T-cell (primary cell): ENCODE measurements at regions of chr10 and their contacts with region 1.

Region 1: GRCh38 chr10:62816331-62817120 is at the start of gene EGR2:
- DNase-seq: peak; percentile 92 to 98 (median 95)
- ATAC-seq: peak; percentile 85 to 86 (median 86)
- H3K4me3 ChIP-seq: peak within 1 kb of the TSS; percentile 57 to 86
- H3K4me3 Mint-ChIP-seq: peak within 1 kb of the TSS; percentile 86 to 97 (median 95)
- H3K27ac ChIP-seq: peak within 1 kb of the TSS; percentile 65
- H3K27ac Mint-ChIP-seq: peak within 1 kb of the TSS; percentile 91 to 93
- H3K4me1 ChIP-seq: peaks cover 14 to 49% of the 10 kb centered on the region in 2 experiments
- H3K4me1 Mint-ChIP-seq: peaks cover 45 to 54% (median 51%) of the 10 kb centered on the region in 3 donors
- H3K27me3 ChIP-seq: peaks cover 9 to 47% of the 10 kb centered on the region in 2 experiments
- H3K27me3 Mint-ChIP-seq: peaks cover 23 to 44% of the 10 kb centered on the region in 2 donors
- total RNA-seq, gene EGR2: 0.90 to 2.7 (median 2.5) TPM

Region 2: GRCh38 chr10:62637249-62638061 is 179.1 kb before region 1 on chr10:
- CTCF ChIA-PET with region 1: interaction called, 8 to 57 read pairs
- POLR2A ChIA-PET with region 1: interaction called in 1 of 2 experiments, 7 read pairs
- DNase-seq: peak; percentile 35 to 85 (median 56)
- ATAC-seq: peak; percentile 93 to 95 (median 94)
- H3K4me3 ChIP-seq: peak overlapping the region; percentile 48 to 63
- H3K4me3 Mint-ChIP-seq: no peak overlapping the region
- H3K27ac ChIP-seq: peak overlapping the region; percentile 91
- H3K27ac Mint-ChIP-seq: no peak overlapping the region
- H3K4me1 ChIP-seq: peaks cover 13 to 39% of the 10 kb centered on the region in 2 experiments
- H3K4me1 Mint-ChIP-seq: peaks cover 3 to 18% (median 10%) of the 10 kb centered on the region in 3 donors
- H3K27me3 ChIP-seq: no peaks in the 10 kb centered on the region
- H3K27me3 Mint-ChIP-seq: no peaks in the 10 kb centered on the region

Region 3: DNA sequence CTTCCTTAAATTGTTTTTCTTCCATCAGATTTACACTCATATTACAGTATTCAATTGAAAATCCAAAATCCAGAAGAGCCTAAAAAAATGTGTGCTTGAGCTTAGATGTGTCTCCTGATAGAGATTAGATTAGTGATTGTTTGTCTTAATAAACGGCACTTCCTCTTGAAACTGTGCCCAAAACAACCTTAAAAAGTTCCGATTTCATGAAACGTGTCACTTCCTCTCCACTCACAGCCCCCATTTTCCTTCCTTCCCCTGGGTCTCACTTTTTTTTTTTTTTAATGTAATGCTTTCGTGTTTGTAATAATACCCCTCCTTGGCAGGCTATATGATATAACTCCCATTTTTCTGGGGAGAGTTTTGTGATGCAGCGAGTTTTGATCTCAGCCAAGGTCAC is 126.8 kb before region 1 on chr10:
- CTCF ChIA-PET with region 1: interaction called in 1 of 2 experiments, 5 read pairs
- POLR2A ChIA-PET with region 1: interaction called in 1 of 2 experiments, 10 read pairs
- DNase-seq: peak in 1 of 35 experiments; percentile 67
- ATAC-seq: peak in 2 of 4 experiments; percentile 44 to 56
- H3K4me3 ChIP-seq: no peak overlapping the region
- H3K4me3 Mint-ChIP-seq: peak overlapping the region; percentile 52 to 62 (median 59)
- H3K27ac ChIP-seq: peak overlapping the region; percentile 68
- H3K27ac Mint-ChIP-seq: peak overlapping the region; percentile 76 to 77
- H3K4me1 ChIP-seq: peaks cover 19 to 40% of the 10 kb centered on the region in 2 experiments
- H3K4me1 Mint-ChIP-seq: peaks cover 43 to 65% (median 59%) of the 10 kb centered on the region in 3 donors
- H3K27me3 ChIP-seq: no peaks in the 10 kb centered on the region
- H3K27me3 Mint-ChIP-seq: no peaks in the 10 kb centered on the region

Region 4: DNA sequence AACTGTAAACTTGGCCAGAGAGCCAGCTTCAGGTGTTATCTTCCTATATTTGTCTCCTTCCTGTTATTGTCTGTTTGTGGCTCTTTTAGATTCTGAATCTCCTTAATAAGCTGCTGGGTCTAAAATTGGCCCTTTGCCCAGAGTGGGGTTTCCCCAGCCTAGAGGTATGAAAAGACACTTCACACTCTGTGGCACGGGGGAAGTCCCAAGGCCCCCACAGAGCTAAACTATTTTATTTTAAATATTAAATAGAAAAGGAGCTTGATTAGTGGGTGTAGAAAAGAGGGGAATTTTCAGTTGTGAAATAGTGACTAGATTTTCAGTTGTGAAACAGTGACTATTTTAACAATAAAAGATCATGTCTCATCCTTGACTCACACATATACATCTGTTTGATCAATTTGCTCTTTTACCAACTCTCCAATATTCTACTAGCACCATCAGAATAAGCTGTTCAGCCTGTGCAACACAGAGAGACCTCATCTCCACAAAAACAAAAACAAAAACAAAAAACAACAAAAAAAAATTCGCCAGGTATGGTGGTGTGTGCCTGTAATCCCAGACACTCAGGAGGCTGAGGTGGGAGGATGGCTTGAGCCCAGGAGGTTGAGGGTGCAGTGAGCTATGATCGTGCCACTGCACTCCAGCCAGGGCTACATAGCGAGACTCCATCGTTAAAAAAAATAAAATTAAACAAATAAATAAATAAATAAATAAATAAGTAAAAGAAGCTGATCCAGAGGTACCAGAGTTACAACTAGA is 36.9 kb before region 1 on chr10:
- CTCF ChIA-PET with region 1: interaction called, 10 to 31 read pairs
- POLR2A ChIA-PET with region 1: interaction called in 1 of 2 experiments, 4 read pairs
- DNase-seq: peak; percentile 48 to 95 (median 85)
- ATAC-seq: peak; percentile 96 to 99 (median 98)
- H3K4me3 ChIP-seq: no peak overlapping the region
- H3K4me3 Mint-ChIP-seq: peak overlapping the region in 1 of 3 donors; percentile 50
- H3K27ac ChIP-seq: peak overlapping the region; percentile 44
- H3K27ac Mint-ChIP-seq: peak overlapping the region; percentile 37 to 59
- H3K4me1 ChIP-seq: peaks cover 12 to 16% of the 10 kb centered on the region in 2 experiments
- H3K4me1 Mint-ChIP-seq: peaks cover 16 to 23% (median 17%) of the 10 kb centered on the region in 3 donors
- H3K27me3 ChIP-seq: no peaks in the 10 kb centered on the region
- H3K27me3 Mint-ChIP-seq: peaks cover 0 to 5% of the 10 kb centered on the region in 2 donors

Region 5: GRCh38 chr10:63027531-63027930 is 211.0 kb after region 1 on chr10:
- CTCF ChIA-PET with region 1: no interaction called
- POLR2A ChIA-PET with region 1: no interaction called
- DNase-seq: no peak
- ATAC-seq: no peak
- H3K4me3 ChIP-seq: no peak overlapping the region
- H3K4me3 Mint-ChIP-seq: no peak overlapping the region
- H3K27ac ChIP-seq: no peak overlapping the region
- H3K27ac Mint-ChIP-seq: no peak overlapping the region
- H3K4me1 ChIP-seq: no peaks in the 10 kb centered on the region
- H3K4me1 Mint-ChIP-seq: no peaks in the 10 kb centered on the region
- H3K27me3 ChIP-seq: peaks cover 0 to 5% of the 10 kb centered on the region in 2 experiments
- H3K27me3 Mint-ChIP-seq: peaks cover 0 to 5% of the 10 kb centered on the region in 2 donors

Region 6: DNA sequence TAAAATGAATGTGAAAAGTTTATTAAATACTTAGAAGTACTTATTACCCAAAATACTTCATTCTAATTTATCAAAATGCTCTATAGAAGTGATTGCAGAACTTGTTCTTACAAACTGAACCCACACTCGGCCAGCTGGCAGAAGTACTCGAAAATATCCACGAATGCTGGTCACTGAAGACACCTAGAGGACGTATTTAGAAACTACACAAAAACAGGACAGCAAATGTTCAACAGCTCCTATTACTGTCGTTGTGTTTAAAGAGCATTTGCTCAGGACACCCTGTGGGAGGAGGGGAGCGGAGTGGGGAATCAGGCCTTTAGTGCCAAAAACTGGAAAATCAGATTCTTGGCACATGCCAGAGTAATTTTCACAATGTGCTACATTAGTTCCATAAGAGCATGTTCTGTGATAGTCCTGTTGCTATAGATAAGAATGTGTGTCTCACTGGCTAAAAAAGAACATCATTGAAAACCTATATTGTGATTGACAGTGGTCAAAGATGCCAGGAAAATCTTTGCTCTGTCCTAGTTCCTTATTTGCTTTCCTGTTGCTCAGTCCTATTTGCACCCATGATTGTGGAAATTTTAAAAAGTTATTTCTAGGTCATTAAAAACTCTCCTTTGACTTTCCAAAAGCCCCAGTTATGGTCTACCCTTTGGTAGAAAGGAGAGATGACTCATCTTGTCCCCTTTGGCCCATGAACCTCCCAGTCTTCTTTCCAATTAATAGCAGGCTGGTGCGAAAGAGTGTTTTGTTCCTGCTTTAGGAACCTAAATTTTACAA is 267.6 kb after region 1 on chr10:
- CTCF ChIA-PET with region 1: interaction called in 1 of 2 experiments, 15 read pairs
- POLR2A ChIA-PET with region 1: no interaction called
- DNase-seq: peak in 28 of 35 experiments; percentile 1 to 73 (median 12)
- ATAC-seq: peak; percentile 55 to 66 (median 64)
- H3K4me3 ChIP-seq: no peak overlapping the region
- H3K4me3 Mint-ChIP-seq: no peak overlapping the region
- H3K27ac ChIP-seq: no peak overlapping the region
- H3K27ac Mint-ChIP-seq: no peak overlapping the region
- H3K4me1 ChIP-seq: no peaks in the 10 kb centered on the region
- H3K4me1 Mint-ChIP-seq: no peaks in the 10 kb centered on the region
- H3K27me3 ChIP-seq: peaks cover 0 to 6% of the 10 kb centered on the region in 2 experiments
- H3K27me3 Mint-ChIP-seq: peaks cover 3 to 14% of the 10 kb centered on the region in 2 donors